GM23248 (cell line): ENCODE measurements at regions of chr7 and their contacts with region 1.

Region 1: GRCh38 chr7:99860281-99861127 is 16.3 kb downstream of the OR2AE1 start:
- DNase-seq: peak; percentile 75
- H3K4me3 ChIP-seq: no peak overlapping the region
- H3K27ac ChIP-seq: no peak overlapping the region
- H3K4me1 ChIP-seq: peaks cover 11% of the 10 kb centered on the region
- H3K27me3 ChIP-seq: peaks cover 25% of the 10 kb centered on the region

Region 2: DNA sequence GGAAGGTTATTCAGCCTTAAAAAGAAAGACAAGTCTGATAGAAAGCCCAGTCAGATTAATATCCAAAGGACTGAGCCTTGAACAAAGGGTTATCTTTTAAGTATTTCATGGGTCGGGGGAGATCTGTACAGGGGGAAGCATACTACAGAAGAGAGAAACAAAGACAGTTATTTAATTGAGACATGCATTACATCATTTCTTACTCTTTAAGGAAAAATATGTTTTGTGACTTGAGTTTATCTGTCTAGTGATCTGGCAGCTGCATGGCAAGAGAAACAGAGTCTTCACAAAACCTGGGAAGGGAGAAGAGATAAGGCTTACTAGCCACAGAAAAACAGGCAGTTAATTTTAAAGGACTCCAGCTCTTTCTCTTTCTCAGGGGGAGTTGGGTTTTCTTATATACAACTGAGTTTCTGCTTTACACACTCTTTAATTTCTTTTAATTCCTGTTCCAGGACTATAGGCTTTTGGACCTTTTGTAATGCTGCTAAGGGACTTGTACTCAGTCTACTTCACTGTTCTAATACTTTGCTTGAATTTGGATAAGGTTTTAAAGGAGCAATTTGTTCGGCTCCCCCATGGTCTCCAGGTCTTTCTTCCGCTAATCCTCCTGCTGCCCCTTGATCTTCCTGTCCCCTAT is 53.5 kb before region 1 on chr7:
- in situ Hi-C with region 1: loop called (anchors 10 kb)
- DNase-seq: no peak
- H3K4me3 ChIP-seq: no peak overlapping the region
- H3K27ac ChIP-seq: no peak overlapping the region
- H3K4me1 ChIP-seq: no peaks in the 10 kb centered on the region
- H3K27me3 ChIP-seq: 0 out of 2 replicates have a peak, but pooled peaks cover 16% of the 10 kb centered on the region